ENCODE measurements at regions of chr7 and their contacts with region 1.

Region 1: DNA sequence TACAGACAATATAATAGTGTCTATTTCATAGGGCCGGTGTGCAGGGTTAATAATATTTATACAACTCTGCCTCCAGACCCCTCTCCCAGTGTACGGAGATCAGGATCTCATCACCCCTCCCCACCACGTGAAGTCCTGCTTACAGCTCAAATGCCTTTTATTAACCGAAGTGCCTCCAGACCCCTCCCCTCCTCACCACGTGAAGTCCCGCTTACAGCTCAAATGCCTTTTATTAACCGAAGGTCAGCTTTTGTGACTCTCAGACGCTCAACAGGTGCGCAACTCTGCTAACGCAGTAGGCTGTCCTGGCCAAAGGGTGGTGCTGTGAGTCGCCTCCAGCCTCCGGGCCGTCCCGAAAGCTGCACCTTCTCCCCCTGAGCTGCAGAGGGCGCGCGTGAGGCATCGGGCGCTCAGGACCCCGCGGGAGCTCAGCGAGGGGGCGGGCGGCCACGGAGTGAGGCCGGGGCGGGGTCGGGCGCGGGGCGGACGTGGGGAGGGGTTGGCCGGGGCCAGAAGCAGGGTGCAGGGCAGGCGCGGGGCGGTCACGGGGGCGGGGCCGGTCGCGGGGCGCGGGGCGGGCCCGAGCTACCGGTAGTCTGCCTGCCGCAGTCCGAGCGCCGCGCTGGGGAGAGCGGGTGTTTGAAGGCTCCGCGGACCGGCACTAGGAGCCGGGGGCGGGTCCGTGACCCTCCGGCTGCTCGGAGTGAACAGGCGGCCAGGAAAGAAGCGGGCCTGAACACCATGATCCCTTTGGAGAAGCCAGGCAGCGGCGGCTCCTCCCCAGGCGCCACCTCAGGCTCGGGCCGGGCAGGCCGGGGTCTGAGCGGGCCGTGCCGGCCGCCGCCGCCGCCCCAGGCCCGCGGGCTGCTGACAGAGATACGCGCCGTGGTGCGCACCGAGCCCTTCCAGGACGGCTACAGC is at the start of gene STK17A:
- DNase-seq: peak; percentile 34
- H3K4me3 ChIP-seq: peak within 1 kb of the TSS; percentile 77
- H3K27me3 ChIP-seq: 0 out of 2 replicates have a peak, but pooled peaks cover 2% of the 10 kb centered on the region
- CTCF ChIP-seq: peak; percentile 99
- polyA plus RNA-seq, gene STK17A: 12.3 and 26.5 TPM in 2 replicates

Region 2: GRCh38 chr7:43560742-43561360 is 21.9 kb before region 1 on chr7:
- CTCF ChIA-PET with region 1: interaction called, 38 read pairs
- POLR2A ChIA-PET with region 1: no interaction called
- DNase-seq: no peak
- H3K4me3 ChIP-seq: no peak overlapping the region
- H3K27me3 ChIP-seq: peaks cover 1% of the 10 kb centered on the region; the same call in 1 of the 2 replicates
- CTCF ChIP-seq: no peak

Region 3: DNA sequence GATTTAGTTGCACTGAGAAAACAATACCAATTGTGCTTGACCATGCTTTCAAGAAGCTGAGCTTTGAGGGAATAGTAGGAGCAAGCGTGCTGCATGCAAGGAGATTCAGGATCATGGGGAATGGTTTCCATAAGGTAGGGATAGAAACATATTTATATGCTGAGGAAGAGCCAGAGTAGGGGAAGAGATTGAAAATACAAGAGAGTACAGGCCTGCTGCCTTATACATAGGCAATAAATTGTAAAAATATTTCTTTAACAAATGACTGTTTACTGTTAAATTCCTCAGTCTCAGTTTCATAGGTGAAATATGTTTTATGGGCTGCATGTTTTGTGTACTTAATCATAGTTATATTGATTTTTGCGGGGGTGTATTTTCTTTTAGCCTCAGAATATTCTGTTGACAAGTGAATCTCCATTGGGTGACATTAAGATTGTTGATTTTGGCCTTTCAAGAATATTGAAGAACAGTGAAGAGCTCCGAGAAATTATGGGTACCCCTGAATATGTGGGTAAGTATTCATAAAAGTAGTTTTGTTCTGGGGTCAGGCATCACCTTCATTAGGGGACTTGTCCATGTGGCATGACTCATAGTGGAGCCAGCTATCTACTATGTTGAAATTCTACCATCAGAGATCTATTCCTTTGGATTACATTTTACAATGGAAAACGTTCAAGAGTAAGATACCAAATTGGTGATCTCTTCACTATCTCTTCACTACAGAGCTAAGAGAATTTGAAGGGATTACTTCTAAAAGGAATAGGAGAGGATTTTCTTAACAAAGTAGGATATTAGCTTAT is 36.6 kb after region 1 on chr7:
- CTCF ChIA-PET with region 1: interaction called, 16 read pairs
- POLR2A ChIA-PET with region 1: no interaction called
- DNase-seq: no peak
- H3K4me3 ChIP-seq: no peak overlapping the region
- H3K27me3 ChIP-seq: no peaks in the 10 kb centered on the region
- CTCF ChIP-seq: no peak

Region 4: GRCh38 chr7:43647673-43648472 is 65.1 kb after region 1 on chr7:
- CTCF ChIA-PET with region 1: interaction called, 95 read pairs
- POLR2A ChIA-PET with region 1: interaction called, 9 read pairs
- DNase-seq: peak; percentile 100
- H3K4me3 ChIP-seq: no peak overlapping the region
- H3K27me3 ChIP-seq: no peaks in the 10 kb centered on the region
- CTCF ChIP-seq: no peak

Region 5: DNA sequence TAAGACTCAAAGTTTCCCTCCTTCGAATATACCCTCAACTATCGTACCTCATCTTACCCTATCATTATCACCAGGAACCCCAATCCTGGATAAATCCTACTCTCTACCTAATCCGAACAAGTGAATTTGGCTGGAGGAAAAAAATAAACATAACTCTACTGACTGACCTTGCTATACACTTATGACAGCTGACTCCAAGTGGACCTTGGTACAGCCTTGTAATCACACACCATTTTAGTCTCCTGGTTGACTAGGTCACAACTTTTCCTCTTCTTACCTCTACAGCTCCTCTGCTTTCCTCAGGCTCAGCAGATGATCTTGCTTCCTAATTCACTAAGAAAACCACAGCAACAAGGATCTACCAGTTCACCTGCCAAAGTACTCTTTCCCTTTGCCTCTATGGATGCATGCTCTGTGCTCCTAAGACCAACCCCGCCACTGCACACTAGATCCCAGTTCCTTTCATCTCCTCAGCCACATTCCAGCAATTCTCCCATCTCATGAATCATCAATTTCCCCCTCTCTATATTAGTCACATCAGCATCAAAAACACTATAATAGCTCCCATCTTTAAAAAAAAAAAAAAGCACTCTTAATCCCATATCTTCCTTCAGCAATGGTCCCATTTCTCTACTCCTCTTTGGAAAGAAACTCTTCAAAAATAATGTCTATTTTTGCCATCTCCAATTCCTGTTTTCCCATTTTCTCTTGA is 111.1 kb after region 1 on chr7:
- CTCF ChIA-PET with region 1: interaction called, 346 read pairs
- POLR2A ChIA-PET with region 1: interaction called, 6 read pairs
- DNase-seq: no peak
- H3K4me3 ChIP-seq: no peak overlapping the region
- H3K27me3 ChIP-seq: no peaks in the 10 kb centered on the region
- CTCF ChIP-seq: no peak

Region 6: DNA sequence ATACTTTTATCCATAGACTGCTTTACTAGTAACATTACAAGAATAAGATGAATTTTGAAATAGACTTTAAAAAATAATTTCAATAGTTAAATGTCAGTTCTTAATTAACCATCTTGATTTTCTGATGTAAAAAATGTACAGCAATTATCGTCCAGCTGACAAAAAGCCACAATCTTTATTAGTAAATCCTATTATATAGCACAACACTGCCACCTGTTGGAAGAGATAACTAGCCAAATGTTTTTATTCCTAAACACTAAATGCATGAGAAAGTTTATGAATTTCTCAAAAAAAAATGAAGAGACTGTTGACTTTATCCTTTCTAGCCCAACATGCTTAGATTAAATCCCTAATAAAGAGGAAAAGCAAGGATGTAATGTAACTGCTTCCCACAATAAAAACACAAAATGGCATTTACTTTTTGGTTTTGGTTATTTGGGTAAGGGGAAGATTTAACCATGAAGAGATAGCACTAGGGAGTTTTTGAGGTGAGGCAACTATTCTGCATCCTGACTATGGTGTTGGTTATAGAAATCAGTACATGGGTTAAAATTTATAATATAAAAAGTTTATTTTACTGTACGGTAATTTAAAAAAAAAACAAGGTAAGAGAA is 138.5 kb after region 1 on chr7:
- CTCF ChIA-PET with region 1: interaction called, 130 read pairs
- POLR2A ChIA-PET with region 1: no interaction called
- DNase-seq: no peak
- H3K4me3 ChIP-seq: no peak overlapping the region
- H3K27me3 ChIP-seq: no peaks in the 10 kb centered on the region
- CTCF ChIP-seq: peak; percentile 50

Measured in BJ (cell line).